ENCODE measurements at regions of chr19 and their contacts with region 1.

Region 1: GRCh38 chr19:47112997-47113849 is at the start of gene ZC3H4:
- DNase-seq: peak; percentile 99
- ATAC-seq: peak; percentile 94 to 98 (median 97)
- H3K4me3 ChIP-seq: peak within 1 kb of the TSS; percentile 77 to 97 (median 82)
- H3K27ac ChIP-seq: peak within 1 kb of the TSS; percentile 99 to 100 (median 100)
- H3K4me1 ChIP-seq: peaks cover 0 to 37% (median 28%) of the 10 kb centered on the region in 9 donors
- H3K27me3 ChIP-seq: no peaks in the 10 kb centered on the region
- CTCF ChIP-seq: no peak
- total RNA-seq, gene ZC3H4: 19.5 to 32.8 (median 26.1) TPM

Region 2: DNA sequence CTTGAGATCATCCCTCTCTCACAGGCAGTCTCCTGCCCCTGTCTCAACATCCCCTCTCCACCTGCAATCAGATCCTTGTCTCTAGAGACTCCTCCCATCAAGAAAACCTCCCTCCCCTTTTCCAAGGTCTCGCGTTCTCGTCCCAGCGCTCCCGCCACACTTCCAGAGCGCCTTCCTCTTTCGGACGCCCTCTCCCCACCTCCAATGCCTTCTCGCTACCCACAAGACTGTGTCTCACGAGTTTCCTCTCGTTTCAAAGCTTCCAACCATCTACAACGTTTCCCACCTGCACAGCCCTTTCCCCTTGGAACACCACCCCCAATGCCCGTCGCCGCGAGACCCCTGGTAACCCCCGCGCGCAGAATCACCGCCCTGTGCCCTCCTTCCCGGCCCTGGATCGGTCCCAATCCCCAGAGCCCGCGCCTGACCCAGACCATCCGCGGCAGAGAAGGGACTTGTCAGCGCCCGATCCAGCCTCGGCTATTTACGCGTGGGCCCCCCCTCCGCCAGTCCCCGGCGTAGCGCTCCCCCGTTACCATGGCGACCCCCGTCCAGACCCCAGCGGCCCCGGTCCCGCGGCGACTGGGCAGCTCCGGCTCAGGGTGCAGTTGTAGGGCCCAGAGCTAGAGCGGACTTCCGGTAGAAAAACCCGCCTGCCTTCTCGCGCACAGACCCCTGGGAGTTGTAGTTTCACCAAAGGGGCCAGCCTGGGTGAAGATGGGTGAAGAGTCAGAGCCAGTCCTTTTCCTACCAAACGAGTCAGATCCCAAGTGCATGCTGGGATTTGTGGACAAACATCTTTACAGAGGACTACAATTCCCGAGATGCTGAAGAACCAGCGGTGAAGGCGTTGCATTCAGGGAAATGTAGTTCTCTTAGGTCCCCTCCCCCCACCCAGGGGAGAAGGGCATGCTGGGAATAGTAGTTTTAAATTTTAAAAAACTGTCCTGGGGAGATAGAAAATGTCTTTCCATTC is 262.7 kb before region 1 on chr19 and contains the start of gene AP2S1:
- intact Hi-C with region 1: loop called in 7 of 10 experiments (anchors 5 to 10 kb)
- DNase-seq: peak; percentile 89 to 98
- ATAC-seq: peak; percentile 96 to 98 (median 96)
- H3K4me3 ChIP-seq: peak within 1 kb of the TSS; percentile 57 to 96 (median 82)
- H3K27ac ChIP-seq: peak within 1 kb of the TSS in 9 of 10 donors; percentile 77 to 93 (median 88)
- H3K4me1 ChIP-seq: peaks cover 6 to 36% (median 19%) of the 10 kb centered on the region in 9 donors
- H3K27me3 ChIP-seq: no peaks in the 10 kb centered on the region
- CTCF ChIP-seq: peak in 1 of 9 donors; percentile 16
- total RNA-seq, gene AP2S1: 68.7 to 123 (median 79.0) TPM

Region 3: DNA sequence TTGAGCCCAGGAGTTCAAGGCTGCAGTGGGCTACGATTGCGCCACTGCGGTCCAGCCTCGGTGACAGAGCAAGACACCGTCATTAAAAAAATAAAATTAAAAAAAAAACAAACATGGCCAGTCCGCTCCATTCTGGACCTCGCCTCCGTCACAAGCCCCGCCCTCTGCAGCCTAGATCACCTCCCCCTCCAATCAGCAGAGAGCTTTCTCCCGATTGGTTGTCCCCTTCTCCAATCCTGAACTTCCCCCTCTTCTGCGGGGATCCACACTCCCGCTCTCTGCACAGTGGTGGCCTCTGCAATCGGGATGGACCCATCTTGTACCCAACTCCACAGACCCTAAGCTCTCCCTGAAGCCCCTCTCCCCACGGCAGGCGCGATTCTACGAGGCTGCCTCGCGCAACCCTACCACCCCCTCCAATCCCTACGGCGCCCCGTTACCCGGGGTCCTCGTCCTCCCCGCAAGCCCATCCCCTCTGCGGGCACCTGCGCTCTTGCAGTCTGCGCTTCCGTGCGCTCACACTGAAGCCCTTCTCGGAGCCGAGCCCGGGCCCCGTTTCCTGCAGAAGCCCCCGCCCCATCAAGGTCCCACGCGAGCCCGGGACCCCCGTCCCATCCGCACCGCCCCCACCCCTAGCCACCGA is 65.3 kb before region 1 on chr19:
- intact Hi-C with region 1: loop called in 1 of 10 experiments (anchors 5 kb)
- DNase-seq: peak; percentile 80 to 86
- ATAC-seq: peak; percentile 82 to 94 (median 88)
- H3K4me3 ChIP-seq: peak overlapping the region; percentile 84 to 99 (median 98)
- H3K27ac ChIP-seq: peak overlapping the region in 9 of 10 donors; percentile 77 to 93 (median 85)
- H3K4me1 ChIP-seq: peaks cover 0 to 13% (median 7%) of the 10 kb centered on the region in 9 donors
- H3K27me3 ChIP-seq: no peaks in the 10 kb centered on the region
- CTCF ChIP-seq: no peak

Region 4: DNA sequence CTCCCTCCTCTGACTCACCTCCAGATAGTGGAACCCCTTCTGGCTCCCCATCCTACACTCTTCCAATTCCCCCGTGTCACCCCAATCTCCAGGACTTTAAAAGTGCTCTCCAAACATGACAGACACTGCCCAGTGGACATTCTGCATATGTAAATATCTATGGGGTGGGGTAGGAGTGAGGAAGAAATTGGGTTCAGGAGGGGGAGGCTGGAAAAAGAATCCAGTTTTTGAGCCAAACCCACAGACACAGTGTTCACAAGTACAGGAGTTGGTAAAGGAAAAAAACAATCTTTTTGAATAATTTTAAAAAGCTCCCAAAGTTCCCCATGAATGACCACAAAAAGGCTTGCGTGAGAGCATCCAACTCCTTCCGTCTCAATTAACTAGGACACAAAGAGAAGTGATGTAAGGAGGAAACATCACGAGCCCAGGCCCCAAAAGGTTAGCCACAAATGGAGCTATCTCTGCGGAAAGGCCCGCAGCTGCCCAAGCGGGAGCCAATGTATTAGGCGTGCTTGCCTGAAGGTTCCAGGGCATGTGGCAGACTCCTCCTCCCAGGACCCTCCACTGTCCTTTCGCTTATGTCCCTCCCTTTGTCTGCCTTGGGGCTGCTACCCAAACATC is 17.6 kb before region 1 on chr19:
- intact Hi-C with region 1: loop called in 1 of 10 experiments (anchors 2 kb)
- DNase-seq: no peak
- ATAC-seq: peak in 1 of 8 donors; percentile 27
- H3K4me3 ChIP-seq: no peak overlapping the region
- H3K27ac ChIP-seq: peak overlapping the region in 9 of 10 donors; percentile 29 to 86 (median 67)
- H3K4me1 ChIP-seq: peaks cover 16 to 60% (median 51%) of the 10 kb centered on the region in 9 donors
- H3K27me3 ChIP-seq: no peaks in the 10 kb centered on the region
- CTCF ChIP-seq: no peak

Region 5: GRCh38 chr19:47152224-47153017 is 39.2 kb after region 1 on chr19:
- intact Hi-C with region 1: no loop called
- DNase-seq: no peak
- ATAC-seq: no peak
- H3K4me3 ChIP-seq: no peak overlapping the region
- H3K27ac ChIP-seq: no peak overlapping the region
- H3K4me1 ChIP-seq: peaks cover 6 to 41% (median 24%) of the 10 kb centered on the region in 9 donors
- H3K27me3 ChIP-seq: no peaks in the 10 kb centered on the region
- CTCF ChIP-seq: no peak